ENCODE measurements at regions of chr3 and their contacts with region 1.

Region 1: DNA sequence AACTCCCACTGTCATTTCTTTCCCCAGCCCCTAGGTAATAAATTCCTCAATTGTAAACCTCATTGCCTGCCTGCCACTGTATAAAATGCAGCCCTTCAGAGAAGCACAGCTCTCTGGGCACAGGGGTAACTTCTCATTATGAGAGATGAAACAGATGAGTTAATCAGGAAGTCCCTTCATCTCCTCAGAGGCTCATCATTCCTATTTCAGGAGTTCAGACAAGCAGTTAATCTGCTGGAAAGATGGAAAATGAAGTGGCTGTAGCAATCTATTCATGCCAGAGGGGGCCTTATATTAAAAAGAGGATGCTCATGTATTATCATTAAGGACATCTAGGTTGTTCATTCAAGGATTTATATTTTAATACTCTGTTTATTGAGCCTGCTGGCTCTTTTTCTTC is 519.5 kb upstream of the LMCD1 start:
- DNase-seq: no peak
- H3K4me3 ChIP-seq: no peak overlapping the region
- H3K27ac ChIP-seq: no peak overlapping the region
- H3K4me1 ChIP-seq: no peaks in the 10 kb centered on the region
- H3K27me3 ChIP-seq: no peaks in the 10 kb centered on the region
- CTCF ChIP-seq: no peak

Region 2: DNA sequence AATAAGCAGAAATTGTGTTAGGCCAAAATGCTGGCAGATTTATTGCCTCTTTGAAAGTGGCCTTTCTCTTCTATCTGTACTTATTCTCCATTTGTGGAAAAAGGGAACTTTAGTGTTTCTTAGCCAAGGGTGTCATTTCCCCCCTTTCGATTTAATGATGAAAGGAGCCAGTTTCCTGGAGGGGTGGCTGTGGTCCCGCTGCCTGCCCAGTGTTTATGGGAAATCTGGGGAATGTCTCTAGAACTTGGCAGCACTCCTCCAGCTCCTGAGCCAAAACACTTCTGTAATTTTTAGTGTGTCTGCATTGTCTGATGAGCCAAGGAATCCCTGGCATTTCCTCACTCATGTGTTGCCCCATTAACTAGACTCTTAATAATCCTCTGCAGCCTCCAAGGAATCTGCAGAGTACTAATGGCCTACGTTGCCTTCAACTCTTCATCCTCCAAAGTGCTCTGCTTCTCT is 672.5 kb before region 1 on chr3:
- CTCF ChIA-PET with region 1: no interaction called
- POLR2A ChIA-PET with region 1: interaction called, 10 read pairs
- intact Hi-C with region 1: no loop called
- DNase-seq: no peak
- H3K4me3 ChIP-seq: no peak overlapping the region
- H3K27ac ChIP-seq: no peak overlapping the region
- H3K4me1 ChIP-seq: no peaks in the 10 kb centered on the region
- H3K27me3 ChIP-seq: no peaks in the 10 kb centered on the region
- CTCF ChIP-seq: no peak

Region 3: DNA sequence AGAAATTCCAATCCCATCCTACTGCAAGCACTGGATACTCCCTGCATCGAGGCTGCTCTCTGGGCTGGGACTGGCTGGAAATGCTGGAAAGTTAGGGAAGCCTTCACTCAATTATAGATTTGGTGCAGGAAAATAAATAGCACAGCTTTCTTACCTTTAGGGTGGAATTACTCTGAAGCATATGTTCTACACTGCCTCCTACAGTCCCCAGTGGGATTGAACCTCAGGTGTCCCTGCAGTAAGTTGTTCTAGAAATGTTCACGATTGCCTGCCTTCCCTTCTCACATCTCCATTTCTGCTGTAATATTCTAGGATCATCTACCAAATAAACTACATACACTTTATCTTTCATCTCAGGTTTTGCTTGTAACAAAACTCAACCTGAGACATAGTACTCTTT is 17.2 kb before region 1 on chr3:
- CTCF ChIA-PET with region 1: no interaction called
- POLR2A ChIA-PET with region 1: no interaction called
- intact Hi-C with region 1: no loop called
- DNase-seq: no peak
- H3K4me3 ChIP-seq: no peak overlapping the region
- H3K27ac ChIP-seq: no peak overlapping the region
- H3K4me1 ChIP-seq: no peaks in the 10 kb centered on the region
- H3K27me3 ChIP-seq: no peaks in the 10 kb centered on the region
- CTCF ChIP-seq: no peak

Region 4: DNA sequence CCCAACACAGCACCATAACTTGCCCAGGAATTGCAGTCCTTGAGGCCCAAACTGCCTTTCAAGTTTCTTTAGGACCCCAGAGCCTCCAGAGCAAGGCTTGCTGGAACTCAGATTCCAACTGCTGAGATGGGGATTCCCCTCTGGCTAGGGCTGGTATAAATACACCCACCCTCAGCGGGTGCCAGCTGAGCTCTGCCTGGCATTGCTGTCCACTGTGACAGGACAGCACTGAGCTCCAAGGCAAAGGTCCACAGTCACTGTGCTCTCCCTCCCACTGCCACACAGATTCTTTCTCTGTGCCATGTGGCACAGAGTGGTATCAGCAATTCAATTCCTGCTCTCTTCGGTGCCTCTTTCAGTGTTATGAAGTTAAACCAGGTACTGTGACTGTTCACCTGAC is 215.3 kb after region 1 on chr3:
- CTCF ChIA-PET with region 1: no interaction called
- POLR2A ChIA-PET with region 1: no interaction called
- intact Hi-C with region 1: no loop called
- DNase-seq: no peak
- H3K4me3 ChIP-seq: no peak overlapping the region
- H3K27ac ChIP-seq: no peak overlapping the region
- H3K4me1 ChIP-seq: no peaks in the 10 kb centered on the region
- H3K27me3 ChIP-seq: no peaks in the 10 kb centered on the region
- CTCF ChIP-seq: no peak